Activated naive CD4-positive, alpha-beta T cell treated with anti-CD3 and anti-CD28 coated beads for 36 hours (primary cell): ENCODE measurements at regions of chr3 and their contacts with region 1.

Region 1: GRCh38 chr3:111547631-111548030 is 5.6 kb downstream of the CD96 start:
- DNase-seq: peak; percentile 74
- H3K4me3 Mint-ChIP-seq: no peak overlapping the region
- H3K27ac Mint-ChIP-seq: no peak overlapping the region
- H3K4me1 Mint-ChIP-seq: peaks cover 39% of the 10 kb centered on the region
- H3K27me3 Mint-ChIP-seq: no peaks in the 10 kb centered on the region

Region 2: GRCh38 chr3:111408011-111408410 is 139.6 kb before region 1 on chr3:
- CTCF ChIA-PET with region 1: no interaction called
- intact Hi-C with region 1: no loop called
- DNase-seq: no peak
- H3K4me3 Mint-ChIP-seq: no peak overlapping the region
- H3K27ac Mint-ChIP-seq: no peak overlapping the region
- H3K4me1 Mint-ChIP-seq: peaks cover 3% of the 10 kb centered on the region
- H3K27me3 Mint-ChIP-seq: no peaks in the 10 kb centered on the region

Region 3: DNA sequence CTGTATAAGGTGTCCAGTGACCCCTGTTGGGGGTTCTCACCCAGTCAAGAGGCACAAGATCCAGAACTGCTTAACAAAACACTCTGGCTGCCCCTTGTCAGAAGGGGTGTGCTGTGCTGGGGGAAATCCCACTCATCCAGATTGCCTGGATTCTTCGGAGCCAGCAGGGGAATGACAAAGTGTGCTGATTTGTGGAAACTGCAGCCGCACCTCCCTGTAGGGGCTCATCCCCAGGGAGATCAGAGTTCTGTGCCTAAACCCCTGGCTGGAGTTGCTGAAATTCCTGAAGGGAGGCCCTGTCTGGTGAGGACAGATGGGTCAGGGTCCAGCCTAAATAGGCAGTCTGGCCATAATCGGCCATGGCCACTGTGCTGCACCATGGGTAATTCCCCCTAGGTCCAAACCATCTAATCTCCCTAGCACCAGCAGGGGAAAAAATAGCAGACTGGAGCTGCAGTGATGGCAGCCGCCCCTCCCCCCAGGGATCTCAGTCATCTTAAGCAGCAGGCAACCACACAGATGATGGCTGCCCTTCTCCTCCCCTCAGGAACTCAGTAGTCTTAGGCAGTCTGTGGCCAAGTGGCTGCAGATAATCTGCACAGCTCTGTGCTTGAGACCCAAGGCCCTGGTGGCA is 74.2 kb before region 1 on chr3:
- CTCF ChIA-PET with region 1: no interaction called
- intact Hi-C with region 1: no loop called
- DNase-seq: no peak
- H3K4me3 Mint-ChIP-seq: no peak overlapping the region
- H3K27ac Mint-ChIP-seq: no peak overlapping the region
- H3K4me1 Mint-ChIP-seq: peaks cover 3% of the 10 kb centered on the region
- H3K27me3 Mint-ChIP-seq: no peaks in the 10 kb centered on the region

Region 4: GRCh38 chr3:111571907-111572460 is 24.4 kb after region 1 on chr3:
- CTCF ChIA-PET with region 1: interaction called, 14 read pairs
- intact Hi-C with region 1: loop called (anchors 1 kb)
- DNase-seq: peak; percentile 78
- H3K4me3 Mint-ChIP-seq: no peak overlapping the region
- H3K27ac Mint-ChIP-seq: peak overlapping the region; percentile 76
- H3K4me1 Mint-ChIP-seq: peaks cover 67% of the 10 kb centered on the region
- H3K27me3 Mint-ChIP-seq: no peaks in the 10 kb centered on the region

Region 5: GRCh38 chr3:111594205-111594604 is 46.6 kb after region 1 on chr3:
- CTCF ChIA-PET with region 1: interaction called, 5 read pairs
- intact Hi-C with region 1: loop called (anchors 1 kb)
- DNase-seq: no peak
- H3K4me3 Mint-ChIP-seq: peak overlapping the region; percentile 94
- H3K27ac Mint-ChIP-seq: peak overlapping the region; percentile 98
- H3K4me1 Mint-ChIP-seq: peaks cover 52% of the 10 kb centered on the region
- H3K27me3 Mint-ChIP-seq: no peaks in the 10 kb centered on the region

Region 6: DNA sequence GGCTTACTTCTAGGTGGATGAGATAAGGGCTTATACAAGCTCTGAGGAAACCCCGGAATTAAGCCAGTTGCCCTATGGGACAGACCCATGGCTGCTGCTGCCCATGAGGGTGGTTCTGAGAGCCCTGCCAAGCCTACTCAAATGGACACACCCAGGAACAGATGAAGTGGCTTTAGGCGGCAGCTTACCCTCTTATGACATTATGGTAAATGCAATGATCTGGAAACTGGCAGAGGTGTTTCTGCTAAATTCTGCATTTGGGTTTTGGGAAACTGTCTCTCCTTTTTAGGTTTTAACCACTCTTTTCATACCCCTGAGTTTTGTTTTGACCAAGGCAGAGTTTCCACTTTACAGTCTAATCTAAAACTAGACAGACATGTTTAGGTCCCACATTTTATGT is 56.5 kb after region 1 on chr3:
- CTCF ChIA-PET with region 1: interaction called, 5 read pairs
- intact Hi-C with region 1: loop called (anchors 1 kb)
- DNase-seq: peak; percentile 70
- H3K4me3 Mint-ChIP-seq: peak overlapping the region; percentile 53
- H3K27ac Mint-ChIP-seq: peak overlapping the region; percentile 97
- H3K4me1 Mint-ChIP-seq: peaks cover 87% of the 10 kb centered on the region
- H3K27me3 Mint-ChIP-seq: no peaks in the 10 kb centered on the region

Region 7: DNA sequence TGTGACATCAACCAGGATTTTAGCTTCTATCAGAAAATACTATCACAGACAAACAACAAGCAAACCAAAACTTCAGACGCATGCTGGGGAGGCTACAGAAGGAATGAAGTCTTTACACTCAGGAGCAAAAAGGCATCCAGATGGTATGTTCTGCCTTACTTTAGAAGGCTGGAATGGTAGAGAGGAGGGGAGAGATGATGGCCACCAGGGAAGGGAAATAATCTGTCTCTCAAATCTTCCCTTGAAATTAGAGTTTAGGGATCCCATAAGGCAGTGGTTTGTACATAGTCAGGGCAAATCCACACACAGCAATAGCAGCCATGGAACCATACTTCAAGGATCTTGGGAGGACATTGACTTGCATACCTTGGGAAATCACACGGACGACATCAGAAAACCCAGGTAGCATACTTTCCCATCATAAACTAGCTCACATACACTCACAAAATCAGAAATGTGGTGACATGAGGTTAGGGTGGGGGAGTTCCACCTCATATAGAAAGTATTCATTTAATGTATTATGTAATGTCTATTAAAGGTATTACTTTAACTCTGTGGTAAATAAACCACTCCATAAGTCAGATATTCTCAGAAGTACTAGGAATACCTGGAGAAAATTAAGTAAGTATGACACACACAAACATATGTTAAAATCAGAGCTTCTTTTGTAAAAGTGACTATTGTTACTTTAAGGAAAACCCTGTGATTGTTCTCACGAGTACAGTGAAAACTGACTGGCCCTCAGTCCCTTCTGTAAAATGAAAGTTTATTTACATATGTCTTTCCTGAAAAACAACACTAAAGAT is 942.2 kb after region 1 on chr3:
- CTCF ChIA-PET with region 1: no interaction called
- intact Hi-C with region 1: loop called (anchors 5 kb)
- DNase-seq: peak; percentile 56
- H3K4me3 Mint-ChIP-seq: peak overlapping the region; percentile 100
- H3K27ac Mint-ChIP-seq: peak overlapping the region; percentile 100
- H3K4me1 Mint-ChIP-seq: peaks cover 81% of the 10 kb centered on the region
- H3K27me3 Mint-ChIP-seq: no peaks in the 10 kb centered on the region